ENCODE measurements at regions of chr12 and their contacts with region 1.

Region 1: GRCh38 chr12:17853054-17853453 is 236.9 kb downstream of the RERGL start:
- DNase-seq: no peak
- ATAC-seq: no peak

Region 2: DNA sequence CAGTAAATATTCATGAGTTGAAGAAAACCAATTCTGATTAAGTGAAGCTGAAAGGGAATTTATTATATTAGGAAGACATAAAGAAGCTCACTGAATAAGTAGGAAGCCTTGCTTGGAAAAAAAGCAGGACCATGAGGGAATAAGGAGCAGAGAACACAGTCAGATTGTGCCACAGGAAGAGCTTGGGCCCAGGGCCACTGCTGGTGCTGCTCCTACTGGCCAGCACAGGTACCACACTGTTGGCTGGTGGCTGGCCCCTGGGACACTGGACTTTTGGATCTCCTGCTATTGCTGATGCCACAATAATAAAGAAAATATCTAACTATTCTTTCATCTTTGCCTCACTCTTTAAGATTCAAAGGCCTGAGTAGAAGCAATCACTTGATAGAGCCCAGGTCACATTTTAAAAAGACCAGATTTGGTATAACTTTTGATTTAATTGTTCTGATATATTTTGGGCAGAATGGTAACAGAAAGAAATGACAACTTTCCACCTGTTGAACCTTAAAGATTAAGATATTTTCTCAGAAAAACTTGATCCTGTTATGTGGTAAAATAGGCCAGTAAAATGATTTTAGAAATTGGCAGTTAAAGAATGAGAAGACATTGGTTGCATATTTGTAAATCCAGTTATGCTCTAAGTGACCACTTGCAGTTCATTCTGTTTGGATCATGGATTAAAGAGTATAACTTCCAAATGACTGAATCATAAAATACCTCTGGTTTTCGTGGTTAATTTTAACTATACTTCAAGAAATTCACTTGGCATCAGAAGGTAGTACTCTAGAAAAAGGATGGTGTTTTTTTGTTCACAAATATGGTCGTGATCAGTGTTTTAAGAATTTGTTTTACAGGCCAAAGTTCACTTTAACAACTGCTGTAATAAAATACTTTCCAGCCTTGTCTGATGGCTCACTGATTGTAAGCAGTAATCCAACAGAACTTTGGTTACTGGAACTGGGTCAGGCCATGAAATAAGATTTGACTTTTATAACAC is 1873.7 kb before region 1 on chr12:
- intact Hi-C with region 1: no loop called
- DNase-seq: no peak
- ATAC-seq: peak; percentile 67

Region 3: DNA sequence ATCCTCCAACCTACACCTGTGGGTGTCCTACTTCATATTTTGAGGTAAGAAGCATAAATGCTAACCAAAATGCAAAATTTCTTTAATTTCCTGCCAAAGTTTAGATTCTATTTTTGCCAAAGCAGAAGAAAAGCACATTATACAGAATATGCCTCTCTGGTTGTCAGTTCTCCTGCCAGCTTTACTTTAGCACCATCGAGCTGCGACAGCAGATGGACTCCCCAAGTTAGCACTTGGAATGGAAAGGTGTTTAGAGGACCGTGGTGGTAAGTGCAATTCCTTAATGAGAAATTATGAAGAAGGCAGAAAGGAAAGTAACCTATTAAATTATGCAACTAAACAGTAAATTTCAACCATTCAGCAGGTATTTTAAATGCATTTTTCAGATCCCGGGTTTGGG is 89.7 kb before region 1 on chr12:
- intact Hi-C with region 1: loop called (anchors 5 kb)
- DNase-seq: no peak
- ATAC-seq: no peak

Region 4: DNA sequence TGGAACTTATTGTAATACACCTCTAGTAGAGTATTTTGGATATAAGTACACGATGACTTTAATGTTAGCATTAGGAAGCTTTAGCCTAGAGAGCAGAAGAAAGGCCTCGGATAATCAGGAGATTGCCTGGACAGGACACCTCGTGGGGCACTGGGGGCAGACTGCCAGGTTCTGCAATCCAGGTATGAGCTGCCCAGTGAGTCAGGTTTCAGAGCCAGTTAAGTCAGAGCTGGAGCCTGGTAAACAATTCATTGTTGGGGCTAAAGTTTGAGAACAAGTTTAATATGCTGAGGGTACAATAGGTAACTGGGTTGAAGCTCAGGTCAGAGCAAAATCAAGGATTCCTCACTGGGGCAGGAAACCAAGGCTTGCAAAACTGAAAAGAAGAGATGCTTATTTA is 129.5 kb after region 1 on chr12:
- intact Hi-C with region 1: no loop called
- DNase-seq: no peak
- ATAC-seq: no peak